CD4-positive, alpha-beta memory T cell (primary cell): ENCODE measurements at regions of chr4 and their contacts with region 1.

Region 1: DNA sequence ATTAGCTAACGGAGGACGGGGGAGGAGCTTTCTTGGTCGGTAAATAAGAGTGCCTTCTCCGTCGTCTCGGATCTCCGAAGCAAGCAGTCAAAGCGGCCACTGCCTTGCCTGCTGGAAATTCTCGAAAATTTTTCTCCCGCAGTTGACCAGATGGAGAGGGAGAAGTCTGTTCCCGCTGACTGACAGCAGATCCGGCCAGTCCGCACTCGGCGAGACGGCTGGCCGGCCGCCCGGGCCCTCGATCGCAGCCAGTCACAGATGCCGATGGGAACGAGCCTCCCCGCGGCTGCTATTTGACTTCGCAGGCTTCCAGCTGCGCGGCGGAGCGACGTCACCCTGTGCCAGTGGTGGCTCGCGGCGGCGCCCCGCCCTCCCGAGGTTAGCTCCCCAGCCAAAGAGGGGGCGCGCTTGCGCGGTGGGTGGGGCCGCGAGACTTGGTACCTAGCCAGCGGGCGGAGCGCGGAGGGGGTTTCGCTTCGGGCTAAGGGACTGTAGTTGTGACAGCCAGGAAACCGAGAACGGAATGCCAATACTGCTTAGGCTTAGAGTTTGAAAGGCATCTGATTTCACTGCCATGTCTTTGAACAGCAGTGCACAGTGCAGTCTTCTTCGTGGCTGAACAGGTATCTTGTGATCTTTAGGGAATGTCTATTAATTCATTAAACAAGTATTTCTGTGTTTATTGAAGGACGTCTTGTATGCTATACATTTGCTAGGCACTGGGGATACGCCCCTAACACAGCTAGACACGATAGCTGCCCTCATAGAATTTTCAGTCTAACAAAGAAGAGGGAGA is at the start of gene PPM1K:
- DNase-seq: peak; percentile 98 to 100 (median 99)
- H3K4me3 ChIP-seq: peak within 1 kb of the TSS; percentile 83 to 92
- H3K4me3 Mint-ChIP-seq: peak within 1 kb of the TSS; percentile 94 to 99 (median 96)
- H3K27ac ChIP-seq: peak within 1 kb of the TSS; percentile 89
- H3K27ac Mint-ChIP-seq: peak within 1 kb of the TSS; percentile 99 to 100 (median 99)
- H3K4me1 ChIP-seq: peaks cover 40% of the 10 kb centered on the region
- H3K4me1 Mint-ChIP-seq: peaks cover 29 to 56% (median 38%) of the 10 kb centered on the region in 4 donors
- H3K27me3 ChIP-seq: no peaks in the 10 kb centered on the region
- H3K27me3 Mint-ChIP-seq: peaks cover 0 to 1% of the 10 kb centered on the region in 2 donors
- total RNA-seq, gene PPM1K: 82.2 to 84.3 TPM

Region 2: DNA sequence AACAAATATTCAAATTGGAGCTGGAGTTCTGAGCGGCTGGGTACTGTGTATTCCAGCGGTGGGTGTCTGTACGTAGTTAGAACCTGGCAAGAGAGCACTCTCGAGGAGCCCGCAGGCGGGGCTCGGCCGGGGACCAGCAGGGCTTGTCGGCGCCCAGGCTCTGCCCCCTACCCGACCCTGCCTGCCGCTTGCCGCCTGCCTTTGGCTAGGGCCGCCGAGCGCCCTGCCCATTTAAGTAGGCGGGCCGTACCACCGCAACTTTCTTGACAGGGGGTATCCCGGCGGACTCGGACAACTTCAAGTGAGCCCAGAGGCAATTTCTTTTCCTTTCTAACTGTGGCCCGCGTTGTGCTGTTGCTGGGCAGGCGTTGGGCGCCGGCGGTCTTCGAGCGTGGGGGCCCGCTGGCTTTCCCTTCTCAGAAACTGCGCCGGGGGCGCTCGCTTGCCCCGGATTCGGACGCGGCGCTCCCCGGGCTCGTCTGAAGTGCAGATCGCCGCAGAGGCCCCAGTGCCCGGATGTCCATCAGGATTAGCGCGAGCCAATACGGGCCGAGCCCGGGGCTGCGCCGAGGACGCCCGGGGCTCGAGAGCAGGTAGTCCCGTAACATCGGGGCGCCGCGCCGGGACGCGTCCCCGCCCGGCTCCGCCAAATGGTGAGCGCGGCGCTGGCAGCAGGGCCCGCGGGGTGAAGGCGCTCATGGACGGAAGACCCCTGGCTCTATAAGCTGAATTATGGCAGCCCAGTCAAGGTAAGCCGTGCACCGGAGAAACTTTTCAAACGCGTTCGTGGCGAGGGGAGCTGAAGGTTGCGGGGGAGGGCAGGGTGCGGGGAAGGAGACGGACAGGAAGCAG is 1277.7 kb before region 1 on chr4:
- CTCF ChIA-PET with region 1: no interaction called
- POLR2A ChIA-PET with region 1: interaction called, 3 read pairs
- intact Hi-C with region 1: loop called (anchors 5 kb)
- DNase-seq: peak; percentile 90 to 95 (median 91)
- H3K4me3 ChIP-seq: peak overlapping the region; percentile 82 to 86
- H3K4me3 Mint-ChIP-seq: peak overlapping the region; percentile 88 to 99 (median 94)
- H3K27ac ChIP-seq: peak overlapping the region; percentile 83
- H3K27ac Mint-ChIP-seq: peak overlapping the region; percentile 91 to 100 (median 97)
- H3K4me1 ChIP-seq: peaks cover 53% of the 10 kb centered on the region
- H3K4me1 Mint-ChIP-seq: peaks cover 47 to 58% (median 53%) of the 10 kb centered on the region in 4 donors
- H3K27me3 ChIP-seq: no peaks in the 10 kb centered on the region
- H3K27me3 Mint-ChIP-seq: no peaks in the 10 kb centered on the region

Region 3: GRCh38 chr4:87949961-87950360 is 334.7 kb before region 1 on chr4:
- CTCF ChIA-PET with region 1: no interaction called
- POLR2A ChIA-PET with region 1: no interaction called
- intact Hi-C with region 1: no loop called
- DNase-seq: no peak
- H3K4me3 ChIP-seq: no peak overlapping the region
- H3K4me3 Mint-ChIP-seq: no peak overlapping the region
- H3K27ac ChIP-seq: no peak overlapping the region
- H3K27ac Mint-ChIP-seq: no peak overlapping the region
- H3K4me1 ChIP-seq: no peaks in the 10 kb centered on the region
- H3K4me1 Mint-ChIP-seq: no peaks in the 10 kb centered on the region
- H3K27me3 ChIP-seq: no peaks in the 10 kb centered on the region
- H3K27me3 Mint-ChIP-seq: peaks cover 1 to 8% of the 10 kb centered on the region in 2 donors

Region 4: GRCh38 chr4:88077911-88078524 is 206.6 kb before region 1 on chr4:
- CTCF ChIA-PET with region 1: no interaction called
- POLR2A ChIA-PET with region 1: no interaction called
- intact Hi-C with region 1: no loop called
- DNase-seq: no peak
- H3K4me3 ChIP-seq: no peak overlapping the region
- H3K4me3 Mint-ChIP-seq: no peak overlapping the region
- H3K27ac ChIP-seq: no peak overlapping the region
- H3K27ac Mint-ChIP-seq: no peak overlapping the region
- H3K4me1 ChIP-seq: no peaks in the 10 kb centered on the region
- H3K4me1 Mint-ChIP-seq: peaks cover 0 to 2% (median 0%) of the 10 kb centered on the region in 4 donors
- H3K27me3 ChIP-seq: no peaks in the 10 kb centered on the region
- H3K27me3 Mint-ChIP-seq: no peaks in the 10 kb centered on the region

Region 5: GRCh38 chr4:88225232-88226105 is 59.2 kb before region 1 on chr4:
- CTCF ChIA-PET with region 1: no interaction called
- POLR2A ChIA-PET with region 1: no interaction called
- intact Hi-C with region 1: no loop called
- DNase-seq: no peak
- H3K4me3 ChIP-seq: no peak overlapping the region
- H3K4me3 Mint-ChIP-seq: no peak overlapping the region
- H3K27ac ChIP-seq: no peak overlapping the region
- H3K27ac Mint-ChIP-seq: peak overlapping the region in 1 of 7 donors; percentile 80
- H3K4me1 ChIP-seq: peaks cover 2% of the 10 kb centered on the region
- H3K4me1 Mint-ChIP-seq: peaks cover 2 to 3% (median 2%) of the 10 kb centered on the region in 4 donors
- H3K27me3 ChIP-seq: no peaks in the 10 kb centered on the region
- H3K27me3 Mint-ChIP-seq: no peaks in the 10 kb centered on the region

Region 6: DNA sequence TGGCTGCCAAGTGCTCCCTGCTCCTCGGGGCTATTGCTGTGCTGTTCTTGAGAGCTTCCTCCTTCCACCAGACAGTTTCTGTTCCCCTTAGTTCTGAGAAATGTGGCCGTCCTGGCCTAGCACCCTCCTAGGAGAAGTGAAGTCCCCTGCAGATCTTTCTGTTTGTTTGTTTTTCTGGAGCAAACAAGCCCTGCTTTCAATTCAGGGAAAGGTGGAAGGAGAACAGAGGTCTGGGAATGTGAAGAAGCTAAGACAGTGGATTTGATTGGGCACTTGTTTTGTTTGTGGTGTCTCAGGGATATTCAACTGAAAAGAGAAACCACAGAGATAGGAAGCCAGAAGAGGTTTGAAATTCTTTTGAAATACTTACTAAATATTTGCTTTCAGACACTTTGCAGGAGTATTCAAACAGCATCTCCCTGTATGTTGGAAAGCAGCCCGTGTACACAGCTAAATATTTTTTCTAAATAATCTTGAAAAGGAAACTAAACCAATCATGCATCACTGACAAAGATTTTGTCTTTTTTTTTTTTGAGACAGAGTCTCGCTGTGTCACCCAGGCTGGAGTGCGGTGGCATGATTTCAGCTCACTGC is 36.2 kb after region 1 on chr4:
- CTCF ChIA-PET with region 1: interaction called, 4 read pairs
- POLR2A ChIA-PET with region 1: interaction called, 26 read pairs
- intact Hi-C with region 1: loop called (anchors 1 kb)
- DNase-seq: peak in 4 of 5 donors; percentile 17 to 24 (median 20)
- H3K4me3 ChIP-seq: peak overlapping the region in 1 of 2 donors; percentile 17
- H3K4me3 Mint-ChIP-seq: peak overlapping the region; percentile 53 to 92 (median 83)
- H3K27ac ChIP-seq: peak overlapping the region; percentile 20
- H3K27ac Mint-ChIP-seq: peak overlapping the region; percentile 70 to 93 (median 86)
- H3K4me1 ChIP-seq: peaks cover 16% of the 10 kb centered on the region
- H3K4me1 Mint-ChIP-seq: peaks cover 11 to 21% (median 13%) of the 10 kb centered on the region in 4 donors
- H3K27me3 ChIP-seq: no peaks in the 10 kb centered on the region
- H3K27me3 Mint-ChIP-seq: no peaks in the 10 kb centered on the region

Region 7: GRCh38 chr4:88456757-88457306 is 172.2 kb after region 1 on chr4 and contains the start of gene HERC5:
- CTCF ChIA-PET with region 1: interaction called, 11 read pairs
- POLR2A ChIA-PET with region 1: interaction called, 109 read pairs
- intact Hi-C with region 1: loop called (anchors 1 kb)
- DNase-seq: peak; percentile 92 to 96 (median 95)
- H3K4me3 ChIP-seq: peak within 1 kb of the TSS; percentile 76 to 96
- H3K4me3 Mint-ChIP-seq: peak within 1 kb of the TSS; percentile 96 to 100 (median 100)
- H3K27ac ChIP-seq: peak within 1 kb of the TSS; percentile 71
- H3K27ac Mint-ChIP-seq: peak within 1 kb of the TSS; percentile 89 to 100 (median 100)
- H3K4me1 ChIP-seq: peaks cover 28% of the 10 kb centered on the region
- H3K4me1 Mint-ChIP-seq: peaks cover 21 to 37% (median 28%) of the 10 kb centered on the region in 4 donors
- H3K27me3 ChIP-seq: no peaks in the 10 kb centered on the region
- H3K27me3 Mint-ChIP-seq: no peaks in the 10 kb centered on the region
- total RNA-seq, gene HERC5: 18.6 to 22.1 TPM

Region 8: DNA sequence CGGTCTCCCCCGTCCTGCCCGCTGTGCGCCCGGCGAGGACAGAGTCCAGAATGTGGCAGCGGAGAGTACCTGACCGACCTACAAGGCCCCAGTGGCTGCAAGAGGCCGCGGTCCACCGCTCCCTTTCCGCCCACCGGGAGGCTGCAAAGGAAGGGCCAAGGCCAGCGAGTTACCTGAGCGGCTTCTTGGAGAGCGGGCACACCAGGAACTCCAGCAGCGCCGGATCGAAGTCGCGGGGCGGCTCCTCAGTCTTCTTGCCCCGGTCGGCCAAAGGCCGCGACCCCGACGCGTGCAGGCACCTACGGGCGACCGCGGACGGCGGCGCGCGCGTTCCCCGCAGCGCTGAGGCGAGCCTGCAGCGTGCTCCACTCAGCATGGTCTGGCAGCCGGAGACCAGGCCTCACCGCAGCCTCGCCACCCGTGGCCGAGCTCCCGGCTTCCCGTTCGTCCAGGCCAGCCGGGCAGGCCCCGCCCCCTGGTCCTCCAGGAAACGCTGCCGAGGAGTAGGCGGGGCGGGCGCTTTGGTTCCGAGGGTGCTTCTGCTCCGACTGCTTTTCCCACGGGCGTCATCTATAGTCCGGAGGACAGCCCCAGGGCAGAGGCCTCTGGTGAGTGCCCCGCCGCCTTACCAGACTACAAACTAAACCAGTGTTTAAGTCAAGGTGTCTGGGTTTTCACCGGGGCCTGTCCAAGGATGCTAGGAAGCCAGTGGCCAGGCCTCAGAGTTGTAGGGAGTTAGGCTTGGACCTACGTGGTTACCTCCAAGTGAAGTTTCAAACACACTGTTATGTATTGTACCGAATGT is 238.9 kb after region 1 on chr4 and contains the start of gene PYURF:
- CTCF ChIA-PET with region 1: no interaction called
- POLR2A ChIA-PET with region 1: interaction called, 16 read pairs
- intact Hi-C with region 1: loop called (anchors 2 kb)
- DNase-seq: peak; percentile 60 to 73 (median 64)
- H3K4me3 ChIP-seq: peak within 1 kb of the TSS; percentile 62 to 69
- H3K4me3 Mint-ChIP-seq: peak within 1 kb of the TSS; percentile 91 to 97 (median 94)
- H3K27ac ChIP-seq: peak within 1 kb of the TSS; percentile 60
- H3K27ac Mint-ChIP-seq: peak within 1 kb of the TSS; percentile 89 to 96 (median 93)
- H3K4me1 ChIP-seq: peaks cover 17% of the 10 kb centered on the region
- H3K4me1 Mint-ChIP-seq: peaks cover 22 to 46% (median 32%) of the 10 kb centered on the region in 4 donors
- H3K27me3 ChIP-seq: no peaks in the 10 kb centered on the region
- H3K27me3 Mint-ChIP-seq: no peaks in the 10 kb centered on the region
- total RNA-seq, gene PYURF: 54.5 to 60.4 TPM

Region 9: GRCh38 chr4:88613417-88613875 is 328.8 kb after region 1 on chr4:
- CTCF ChIA-PET with region 1: no interaction called
- POLR2A ChIA-PET with region 1: interaction called, 18 read pairs
- intact Hi-C with region 1: no loop called
- DNase-seq: peak; percentile 76 to 87 (median 84)
- H3K4me3 ChIP-seq: peak overlapping the region in 1 of 2 donors; percentile 43
- H3K4me3 Mint-ChIP-seq: peak overlapping the region; percentile 69 to 88 (median 79)
- H3K27ac ChIP-seq: peak overlapping the region; percentile 62
- H3K27ac Mint-ChIP-seq: peak overlapping the region; percentile 93 to 99 (median 97)
- H3K4me1 ChIP-seq: peaks cover 67% of the 10 kb centered on the region
- H3K4me1 Mint-ChIP-seq: peaks cover 65 to 91% (median 77%) of the 10 kb centered on the region in 4 donors
- H3K27me3 ChIP-seq: no peaks in the 10 kb centered on the region
- H3K27me3 Mint-ChIP-seq: no peaks in the 10 kb centered on the region

Region 10: GRCh38 chr4:88823058-88823919 is 538.7 kb after region 1 on chr4:
- CTCF ChIA-PET with region 1: no interaction called
- POLR2A ChIA-PET with region 1: interaction called, 5 read pairs
- intact Hi-C with region 1: loop called (anchors 5 kb)
- DNase-seq: peak; percentile 79 to 91 (median 88)
- H3K4me3 ChIP-seq: peak overlapping the region; percentile 57 to 72
- H3K4me3 Mint-ChIP-seq: peak overlapping the region; percentile 89 to 98 (median 94)
- H3K27ac ChIP-seq: peak overlapping the region; percentile 71
- H3K27ac Mint-ChIP-seq: peak overlapping the region; percentile 92 to 99 (median 98)
- H3K4me1 ChIP-seq: peaks cover 33% of the 10 kb centered on the region
- H3K4me1 Mint-ChIP-seq: peaks cover 23 to 45% (median 32%) of the 10 kb centered on the region in 4 donors
- H3K27me3 ChIP-seq: no peaks in the 10 kb centered on the region
- H3K27me3 Mint-ChIP-seq: peaks cover 0 to under 1% of the 10 kb centered on the region in 2 donors